Psoas muscle (tissue), 8 donors: ENCODE measurements at regions of chr22 and their contacts with region 1.

Region 1: DNA sequence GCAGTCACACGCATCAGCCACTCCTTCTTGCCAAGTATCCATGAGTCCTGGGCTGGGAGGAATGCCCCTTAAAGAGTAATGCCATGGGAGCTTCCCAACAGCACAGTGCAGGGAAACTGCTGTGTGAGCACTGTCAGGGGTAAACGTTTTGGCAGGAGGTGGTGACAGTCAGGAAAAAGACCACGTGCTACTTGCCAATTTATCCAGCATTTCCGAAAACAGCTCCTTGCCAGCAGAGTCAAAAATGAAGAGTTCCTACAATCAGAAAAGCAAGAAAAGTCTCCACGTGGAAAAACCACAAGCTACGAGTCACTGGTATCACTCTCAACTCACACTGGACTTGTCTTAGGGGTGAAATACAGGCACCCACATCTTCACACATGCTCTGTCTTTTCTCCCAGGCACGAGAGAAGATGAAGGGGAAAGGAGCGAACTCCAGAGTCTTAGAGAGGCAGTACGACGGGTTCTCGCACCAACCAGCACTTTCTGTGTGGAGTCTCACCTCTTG is 9.9 kb downstream of the IFT27 start:
- DNase-seq: no peak
- ATAC-seq: no peak
- H3K4me3 ChIP-seq: no peak overlapping the region
- H3K27ac ChIP-seq: no peak overlapping the region
- H3K4me1 ChIP-seq: no peaks in the 10 kb centered on the region
- H3K27me3 ChIP-seq: no peaks in the 10 kb centered on the region
- CTCF ChIP-seq: no peak

Region 2: DNA sequence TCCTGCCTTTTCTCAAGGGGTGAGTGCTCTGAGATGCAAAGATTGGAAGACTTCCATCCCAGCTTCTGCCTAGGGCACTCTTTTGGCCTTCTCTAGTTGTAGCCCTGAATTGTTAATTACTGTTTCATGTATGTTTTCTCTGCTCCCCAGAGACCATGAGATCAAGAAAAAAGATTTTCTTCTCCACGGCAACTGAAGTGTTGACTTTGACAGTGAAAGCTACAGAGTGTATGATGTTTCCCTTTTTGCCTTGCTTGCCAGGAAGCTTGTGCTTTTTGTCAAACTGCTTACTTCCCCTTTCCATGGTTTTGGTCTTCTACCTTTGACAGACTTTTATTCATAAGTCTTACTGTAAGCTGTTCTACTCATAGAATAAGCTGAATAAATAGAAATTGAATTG is 213.7 kb before region 1 on chr22:
- intact Hi-C with region 1: loop called in 1 of 2 experiments (anchors 5 kb)
- DNase-seq: no peak
- ATAC-seq: no peak
- H3K4me3 ChIP-seq: no peak overlapping the region
- H3K27ac ChIP-seq: no peak overlapping the region
- H3K4me1 ChIP-seq: no peaks in the 10 kb centered on the region
- H3K27me3 ChIP-seq: peaks cover 0 to 72% (median 12%) of the 10 kb centered on the region in 3 donors
- CTCF ChIP-seq: no peak

Region 3: GRCh38 chr22:37353839-37354238 is 587.8 kb after region 1 on chr22:
- intact Hi-C with region 1: no loop called
- DNase-seq: no peak
- ATAC-seq: no peak
- H3K4me3 ChIP-seq: no peak overlapping the region
- H3K27ac ChIP-seq: no peak overlapping the region
- H3K4me1 ChIP-seq: no peaks in the 10 kb centered on the region
- H3K27me3 ChIP-seq: peaks cover 0 to 40% (median 6%) of the 10 kb centered on the region in 3 donors
- CTCF ChIP-seq: no peak